ENCODE measurements at regions of chr19 and their contacts with region 1.

Region 1: GRCh38 chr19:24033301-24033962 is 53.6 kb upstream of the ZNF254 start:
- H3K4me3 Mint-ChIP-seq: peak overlapping the region; percentile 100
- H3K27ac Mint-ChIP-seq: peak overlapping the region; percentile 99
- H3K4me1 Mint-ChIP-seq: peaks cover 31% of the 10 kb centered on the region
- H3K27me3 Mint-ChIP-seq: no peaks in the 10 kb centered on the region

Region 2: GRCh38 chr19:23249911-23250649 is 783.4 kb before region 1 on chr19 and contains the start of gene ZNF724:
- intact Hi-C with region 1: loop called (anchors 5 kb)
- H3K4me3 Mint-ChIP-seq: peak within 1 kb of the TSS; percentile 94
- H3K27ac Mint-ChIP-seq: peak within 1 kb of the TSS; percentile 90
- H3K4me1 Mint-ChIP-seq: peaks cover 5% of the 10 kb centered on the region
- H3K27me3 Mint-ChIP-seq: no peaks in the 10 kb centered on the region

Region 3: GRCh38 chr19:23686621-23687423 is 346.6 kb before region 1 on chr19 and contains the start of gene ZNF675:
- intact Hi-C with region 1: loop called (anchors 10 kb)
- H3K4me3 Mint-ChIP-seq: peak within 1 kb of the TSS; percentile 98
- H3K27ac Mint-ChIP-seq: peak within 1 kb of the TSS; percentile 99
- H3K4me1 Mint-ChIP-seq: peaks cover 13% of the 10 kb centered on the region
- H3K27me3 Mint-ChIP-seq: no peaks in the 10 kb centered on the region

Region 4: DNA sequence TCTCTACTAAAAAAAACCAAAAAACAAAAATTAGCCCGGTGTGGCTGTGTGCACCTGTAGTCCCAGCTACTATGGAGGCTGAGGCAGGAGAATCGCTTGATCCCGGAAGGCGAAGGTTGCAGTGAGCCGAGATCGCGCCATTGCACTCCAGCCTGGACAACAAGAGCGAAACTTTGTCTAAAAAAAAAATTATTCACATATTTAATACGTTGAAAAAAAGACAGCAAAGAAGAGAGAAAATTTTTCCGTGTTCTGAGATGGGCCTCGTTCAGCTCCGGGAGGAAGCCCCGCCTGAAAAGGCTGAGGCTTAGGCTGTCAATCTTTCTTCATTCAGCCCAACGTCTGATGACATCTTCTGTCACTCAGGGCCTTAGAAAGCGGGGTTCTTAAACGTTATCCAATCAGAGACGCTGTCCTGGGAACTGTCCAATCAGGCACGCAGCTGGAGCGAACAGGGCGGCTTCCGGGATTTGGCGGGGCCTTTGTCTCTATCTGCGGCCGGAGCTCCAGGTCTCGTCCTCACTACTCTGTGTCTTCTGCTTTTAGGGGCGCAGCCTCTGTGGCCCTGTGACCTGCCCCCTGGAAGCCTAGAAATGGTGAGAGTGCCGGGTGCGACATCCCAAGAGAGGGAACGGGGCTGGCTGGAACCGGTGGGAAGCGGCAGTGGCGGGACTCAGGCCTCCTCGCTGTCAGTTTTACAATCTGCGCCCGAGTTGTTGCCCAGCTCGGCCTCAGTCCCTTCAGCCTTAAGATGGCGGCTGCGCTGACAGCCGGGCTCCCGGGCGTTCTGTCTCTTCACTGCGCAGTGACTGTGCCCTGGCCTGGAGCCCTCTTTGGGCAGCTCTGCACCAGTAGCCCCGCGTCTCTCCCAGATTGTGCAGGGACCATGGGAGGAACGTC is 118.8 kb before region 1 on chr19 and contains the start of gene ZNF726:
- intact Hi-C with region 1: loop called (anchors 5 kb)
- H3K4me3 Mint-ChIP-seq: peak within 1 kb of the TSS; percentile 98
- H3K27ac Mint-ChIP-seq: peak within 1 kb of the TSS; percentile 90
- H3K4me1 Mint-ChIP-seq: no peaks in the 10 kb centered on the region
- H3K27me3 Mint-ChIP-seq: no peaks in the 10 kb centered on the region

Region 5: DNA sequence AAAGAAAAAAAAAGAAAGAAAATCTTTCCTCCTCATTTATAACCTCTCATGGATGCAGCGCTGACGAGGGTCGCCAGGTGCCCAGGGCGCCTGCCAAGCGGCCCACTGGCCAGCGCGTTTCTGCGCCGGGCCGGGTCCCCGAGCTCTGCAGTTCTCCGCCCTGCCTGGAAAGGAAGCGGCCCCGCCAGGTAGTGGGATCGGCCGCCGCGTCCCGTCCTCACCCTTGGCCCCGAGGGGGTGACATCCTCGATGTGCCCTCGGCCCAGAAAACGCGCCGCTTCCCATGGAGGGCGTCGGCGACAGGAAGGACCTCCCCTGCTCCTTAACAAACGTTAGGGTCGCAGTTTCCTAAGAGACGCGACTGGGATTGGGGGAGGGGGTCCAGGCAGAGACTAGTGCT is 61.8 kb before region 1 on chr19:
- intact Hi-C with region 1: no loop called
- H3K4me3 Mint-ChIP-seq: no peak overlapping the region
- H3K27ac Mint-ChIP-seq: no peak overlapping the region
- H3K4me1 Mint-ChIP-seq: no peaks in the 10 kb centered on the region
- H3K27me3 Mint-ChIP-seq: peaks cover 17% of the 10 kb centered on the region

Region 6: GRCh38 chr19:24086974-24087595 is 53.7 kb after region 1 on chr19 and contains the start of gene ZNF254:
- intact Hi-C with region 1: loop called (anchors 1 kb)
- H3K4me3 Mint-ChIP-seq: peak within 1 kb of the TSS; percentile 94
- H3K27ac Mint-ChIP-seq: peak within 1 kb of the TSS; percentile 99
- H3K4me1 Mint-ChIP-seq: no peaks in the 10 kb centered on the region
- H3K27me3 Mint-ChIP-seq: no peaks in the 10 kb centered on the region